Heart left ventricle (tissue), 16 donors: ENCODE measurements at regions of chr15 and their contacts with region 1.

Region 1: DNA sequence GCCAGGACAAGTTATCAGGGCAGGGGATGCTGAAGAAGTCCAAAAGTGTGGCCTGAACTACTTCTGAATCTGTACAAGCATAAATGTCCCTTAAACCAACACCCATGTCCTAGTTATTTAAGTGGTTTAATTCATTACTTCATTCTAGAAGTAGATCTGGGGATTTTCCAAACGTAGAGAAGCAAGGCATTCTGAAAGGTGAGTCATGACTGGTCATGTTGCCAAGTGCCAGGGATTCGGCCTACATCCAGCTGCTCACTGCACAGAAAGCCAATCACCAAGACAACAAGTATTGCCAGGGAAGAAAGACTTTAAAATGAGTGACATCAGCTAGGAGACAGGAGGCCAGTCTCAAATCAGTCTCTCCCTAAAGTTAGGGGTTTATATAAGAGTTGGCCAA is 396.6 kb downstream of the GABRB3 start:
- DNase-seq: no peak
- ATAC-seq: no peak
- H3K4me3 ChIP-seq: no peak overlapping the region
- H3K27ac ChIP-seq: no peak overlapping the region
- H3K4me1 ChIP-seq: no peaks in the 10 kb centered on the region
- H3K27me3 ChIP-seq: no peaks in the 10 kb centered on the region
- CTCF ChIP-seq: no peak
- POLR2A ChIP-seq: no peak

Region 2: DNA sequence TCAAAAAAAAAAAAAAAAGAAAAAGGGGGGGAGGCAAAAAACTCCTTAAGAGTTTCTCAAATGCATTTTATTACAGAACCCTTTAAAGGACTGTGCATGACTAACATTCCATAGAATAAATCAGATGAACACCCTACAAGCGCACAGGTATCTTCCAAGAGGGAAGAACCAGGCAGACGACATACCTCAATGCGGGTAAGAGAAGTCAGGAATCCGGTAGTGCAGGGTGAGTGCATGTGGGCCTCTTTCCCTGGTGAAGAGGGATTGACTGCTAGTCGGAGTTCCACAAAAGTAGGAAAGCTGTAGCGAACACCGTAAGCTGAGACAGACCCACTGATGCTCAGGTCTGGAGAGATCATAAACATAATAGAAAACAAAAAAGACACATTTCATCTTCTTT is 35.9 kb before region 1 on chr15:
- intact Hi-C with region 1: loop called in 1 of 10 experiments (anchors 5 kb)
- DNase-seq: no peak
- ATAC-seq: no peak
- H3K4me3 ChIP-seq: no peak overlapping the region
- H3K27ac ChIP-seq: no peak overlapping the region
- H3K4me1 ChIP-seq: no peaks in the 10 kb centered on the region
- H3K27me3 ChIP-seq: no peaks in the 10 kb centered on the region
- CTCF ChIP-seq: no peak
- POLR2A ChIP-seq: no peak